GM10248 (cell line): ENCODE measurements at regions of chr5 and their contacts with region 1.

Region 1: GRCh38 chr5:131382407-131383395 is 118.8 kb downstream of the CDC42SE2 start:
- DNase-seq: peak; percentile 46
- CTCF ChIP-seq: peak; percentile 53

Region 2: DNA sequence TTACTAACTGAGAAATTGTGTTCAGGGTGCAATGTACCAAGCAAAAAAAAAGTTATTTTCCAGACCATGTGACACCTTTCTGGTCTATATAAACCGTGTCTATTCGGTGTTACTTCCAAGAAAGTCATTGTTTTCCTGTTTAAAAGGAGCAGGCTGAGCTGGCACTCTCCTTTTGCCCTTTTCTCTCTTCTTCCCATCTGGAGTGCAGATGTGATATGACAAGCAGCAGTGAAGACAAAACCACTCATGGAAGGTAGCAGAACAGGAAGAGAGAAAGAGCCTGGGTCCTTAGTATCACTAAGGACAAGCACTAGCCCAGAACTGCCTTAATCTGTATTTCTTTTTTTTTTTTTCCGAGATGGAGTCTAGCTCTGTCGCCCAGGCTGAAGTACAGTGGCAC is 186.4 kb before region 1 on chr5:
- CTCF ChIA-PET with region 1: no interaction called
- POLR2A ChIA-PET with region 1: interaction called, 10 read pairs
- DNase-seq: no peak
- CTCF ChIP-seq: no peak

Region 3: DNA sequence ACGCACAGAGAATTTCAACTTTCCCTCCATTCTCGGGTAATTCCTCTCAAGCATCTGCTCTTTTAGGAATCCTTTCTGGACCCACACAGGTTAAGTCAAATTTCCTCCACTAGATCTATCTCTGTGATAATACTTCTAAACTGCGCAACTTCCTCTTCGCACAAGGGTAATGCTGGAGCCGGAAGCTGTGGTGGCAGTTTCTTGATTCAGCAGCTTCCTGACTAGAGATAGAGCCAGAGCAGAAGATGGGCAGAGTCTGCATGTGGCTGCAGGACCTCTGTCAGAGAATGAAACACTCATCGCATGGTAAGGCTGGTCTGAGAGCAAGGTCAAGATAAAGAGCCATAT is 129.9 kb before region 1 on chr5:
- CTCF ChIA-PET with region 1: interaction called, 16 read pairs
- POLR2A ChIA-PET with region 1: no interaction called
- DNase-seq: peak; percentile 55
- CTCF ChIP-seq: no peak

Region 4: DNA sequence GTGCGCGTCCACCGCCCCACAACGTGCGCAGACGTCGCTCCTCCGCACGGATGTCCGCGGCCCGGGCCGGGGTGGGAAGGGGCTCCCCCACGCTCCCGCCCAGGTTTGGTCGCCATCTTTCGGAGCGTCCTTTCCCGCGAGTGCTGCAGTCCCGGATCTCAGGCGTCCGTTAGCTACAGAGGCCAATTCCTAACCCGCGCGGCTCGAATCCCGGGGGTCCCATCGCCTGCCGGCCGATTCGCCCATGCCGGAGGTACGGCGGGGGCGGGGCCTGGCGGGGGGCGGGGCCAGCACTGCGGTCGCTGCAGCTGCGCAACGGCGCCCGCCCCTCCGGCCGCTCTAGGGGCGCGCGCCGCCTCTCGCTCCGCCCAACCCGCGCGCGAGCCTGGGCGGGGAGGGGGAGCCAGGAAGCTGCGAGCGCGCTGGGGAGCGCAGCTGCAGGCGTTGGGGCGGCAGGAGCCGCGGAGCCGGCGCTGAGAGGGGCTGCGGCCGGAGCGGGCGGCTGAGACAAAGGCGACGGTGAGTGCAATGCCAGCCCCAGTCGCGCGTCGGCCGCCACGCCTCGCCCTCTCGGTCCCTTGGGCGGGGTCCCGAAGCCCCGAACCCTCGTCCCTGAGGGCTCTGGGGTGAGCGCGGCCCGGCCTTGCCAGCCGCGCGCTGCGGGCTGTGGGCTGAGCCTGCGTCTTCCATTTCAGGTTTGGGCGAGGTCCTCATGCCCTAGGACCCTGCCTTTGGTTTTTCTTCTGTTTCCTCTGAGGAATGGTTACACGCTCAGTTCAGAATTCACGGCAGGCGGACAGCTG is 118.9 kb before region 1 on chr5 and contains the start of gene CDC42SE2:
- CTCF ChIA-PET with region 1: interaction called, 33 read pairs
- POLR2A ChIA-PET with region 1: interaction called, 3 read pairs
- DNase-seq: peak; percentile 87
- CTCF ChIP-seq: no peak

Region 5: DNA sequence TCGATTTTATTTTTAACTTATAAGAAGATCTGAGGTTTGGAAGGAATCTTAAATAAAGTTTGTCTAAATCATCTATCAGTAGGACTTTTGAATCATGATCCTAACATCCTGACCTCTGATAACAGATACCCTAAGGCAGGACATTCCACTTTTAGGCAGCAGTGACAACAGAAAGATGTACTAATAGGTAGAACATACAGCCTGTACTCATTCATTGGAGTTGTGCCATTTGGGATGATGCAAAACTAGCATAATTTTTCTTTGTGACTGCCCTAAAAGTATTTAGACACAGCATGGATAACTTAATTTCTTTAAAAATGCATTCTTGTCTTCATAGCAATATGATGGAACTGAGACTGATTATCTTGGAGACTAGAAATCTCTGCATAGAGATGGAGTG is 79.2 kb before region 1 on chr5:
- CTCF ChIA-PET with region 1: no interaction called
- POLR2A ChIA-PET with region 1: no interaction called
- DNase-seq: no peak
- CTCF ChIP-seq: no peak

Region 6: GRCh38 chr5:131364507-131365050 is 18.1 kb before region 1 on chr5:
- CTCF ChIA-PET with region 1: interaction called, 16 read pairs
- POLR2A ChIA-PET with region 1: no interaction called
- DNase-seq: no peak
- CTCF ChIP-seq: no peak

Region 7: DNA sequence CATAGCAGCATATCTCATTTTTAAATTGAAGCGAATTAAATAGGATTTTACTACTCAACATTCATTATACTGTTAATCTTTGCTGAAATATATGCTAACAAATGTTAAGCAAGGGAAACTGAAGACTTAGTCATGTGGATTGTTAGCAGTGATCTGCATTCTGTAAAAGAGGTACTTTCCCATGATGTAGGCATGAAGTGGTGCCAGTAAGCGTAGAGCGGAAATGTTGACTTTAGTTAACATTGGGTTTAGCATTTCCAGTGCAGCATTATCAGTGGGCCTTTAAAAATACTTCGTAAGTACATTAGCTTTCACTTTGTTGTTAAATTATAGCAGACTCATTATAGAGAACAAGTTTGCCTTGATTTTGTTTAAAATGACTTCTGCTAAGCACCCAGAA is 11.4 kb after region 1 on chr5:
- CTCF ChIA-PET with region 1: interaction called, 24 read pairs
- POLR2A ChIA-PET with region 1: no interaction called
- DNase-seq: peak; percentile 55
- CTCF ChIP-seq: no peak

Region 8: DNA sequence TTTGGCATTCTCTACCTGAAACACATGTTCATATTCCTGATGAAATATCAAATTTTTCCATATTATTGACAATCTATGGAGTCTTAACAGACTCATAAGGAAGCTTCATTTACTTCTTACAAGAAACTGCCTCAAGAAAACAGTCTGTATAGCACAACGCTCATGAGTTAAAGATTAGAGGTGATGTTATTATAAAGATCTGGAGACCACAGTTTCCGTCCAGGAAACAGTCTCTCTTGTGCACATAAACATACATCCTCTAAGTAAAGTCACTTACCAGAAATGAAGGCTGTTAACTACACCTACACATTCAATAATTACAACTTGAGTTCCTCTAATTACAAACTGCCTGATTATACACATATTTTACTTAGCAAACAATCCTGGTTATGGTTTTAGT is 165.5 kb after region 1 on chr5:
- CTCF ChIA-PET with region 1: no interaction called
- POLR2A ChIA-PET with region 1: no interaction called
- DNase-seq: no peak
- CTCF ChIP-seq: no peak